Activated CD4-positive, alpha-beta T cell treated with anti-CD3 and anti-CD28 coated beads for 36 hours (primary cell): ENCODE measurements at regions of chr13 and their contacts with region 1.

Region 1: DNA sequence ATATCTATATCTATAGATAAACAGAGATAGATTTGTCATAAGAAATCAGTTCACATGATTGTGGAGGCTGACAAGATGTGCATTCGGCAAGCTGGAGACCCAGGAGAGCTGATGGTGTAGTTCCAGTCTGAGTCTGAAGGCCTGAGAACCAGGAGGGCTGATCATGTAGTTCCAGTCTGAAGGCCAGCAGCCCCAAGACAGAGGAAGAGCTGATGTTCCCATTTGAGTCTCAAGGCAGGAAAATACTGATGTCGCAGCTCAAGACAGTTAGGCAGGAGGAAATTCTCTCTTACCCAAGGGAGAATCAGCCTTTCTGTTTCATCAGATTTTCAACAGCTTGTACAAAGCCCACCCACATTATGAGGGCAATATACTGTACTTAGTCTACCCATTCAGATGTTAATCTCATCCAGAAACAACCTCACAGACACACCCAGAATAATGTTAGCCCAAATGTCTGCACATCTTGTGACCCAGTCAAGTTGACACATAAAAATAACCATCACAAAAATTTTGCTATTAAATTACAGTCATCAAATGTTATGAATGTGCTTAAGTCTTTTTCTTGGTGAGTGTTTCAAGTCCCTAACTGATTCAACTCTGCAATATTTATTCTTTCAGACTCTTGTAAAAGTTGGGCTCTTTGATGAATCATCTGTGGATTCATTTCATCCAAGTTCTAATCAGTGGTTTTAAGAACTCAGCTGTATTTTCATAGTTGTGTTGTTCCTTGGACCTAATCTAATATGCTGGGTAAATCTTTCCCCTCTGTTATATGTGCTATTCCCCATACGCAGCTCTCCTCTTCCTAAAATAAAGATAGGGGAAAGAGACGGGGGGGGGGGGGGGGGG is 22.7 kb upstream of the LRCH1 start:
- DNase-seq: no peak
- ATAC-seq: peak; percentile 76
- H3K4me3 Mint-ChIP-seq: no peak overlapping the region
- H3K27ac Mint-ChIP-seq: peak overlapping the region; percentile 33
- H3K4me1 Mint-ChIP-seq: peaks cover 32% of the 10 kb centered on the region
- H3K27me3 Mint-ChIP-seq: peaks cover 8% of the 10 kb centered on the region

Region 2: DNA sequence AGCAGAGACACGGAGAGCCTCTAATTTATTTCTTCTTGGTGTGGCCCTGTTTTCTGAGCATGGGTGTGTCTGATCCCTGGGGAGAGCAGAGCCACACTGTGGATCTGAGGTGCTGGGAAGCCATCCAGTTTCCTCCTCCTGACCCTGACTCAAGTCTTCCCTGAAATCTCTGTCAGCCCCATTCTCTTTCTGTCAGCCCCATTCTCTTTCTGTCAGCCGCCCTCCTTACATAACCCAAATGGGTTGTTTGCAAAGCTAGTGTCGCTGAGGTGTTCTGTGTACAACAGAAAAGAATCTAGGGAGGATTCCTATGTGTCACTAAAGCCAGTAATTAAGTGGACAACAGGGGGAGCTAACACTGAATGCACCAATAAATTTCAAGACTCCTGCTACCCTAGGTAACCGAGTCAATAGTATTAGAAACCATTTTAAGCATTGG is 72.9 kb after region 1 on chr13:
- CTCF ChIA-PET with region 1: no interaction called
- POLR2A ChIA-PET with region 1: no interaction called
- intact Hi-C with region 1: loop called in 1 of 2 experiments (anchors 2 kb)
- DNase-seq: no peak
- ATAC-seq: no peak
- H3K4me3 Mint-ChIP-seq: no peak overlapping the region
- H3K27ac Mint-ChIP-seq: no peak overlapping the region
- H3K4me1 Mint-ChIP-seq: peaks cover 74% of the 10 kb centered on the region
- H3K27me3 Mint-ChIP-seq: no peaks in the 10 kb centered on the region

Region 3: DNA sequence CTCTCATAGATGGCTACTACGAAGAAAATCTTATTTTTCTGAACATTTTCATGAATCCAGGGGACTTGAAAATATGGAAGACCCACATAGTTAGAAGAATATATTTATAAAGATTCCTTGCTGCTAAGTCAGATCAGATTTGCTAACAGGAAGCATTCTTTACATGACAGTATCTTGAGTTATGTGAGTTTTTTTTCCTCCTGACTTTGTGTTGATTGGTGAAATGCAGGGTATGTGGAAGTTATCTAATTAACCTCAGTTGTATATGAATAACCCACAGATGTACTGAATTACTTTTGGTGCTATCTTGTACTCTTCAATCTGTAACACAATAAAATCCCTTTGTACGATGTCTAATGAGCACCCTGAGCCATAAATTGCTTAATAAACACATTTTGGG is 212.9 kb after region 1 on chr13:
- CTCF ChIA-PET with region 1: no interaction called
- POLR2A ChIA-PET with region 1: no interaction called
- intact Hi-C with region 1: no loop called
- DNase-seq: no peak
- ATAC-seq: no peak
- H3K4me3 Mint-ChIP-seq: no peak overlapping the region
- H3K27ac Mint-ChIP-seq: no peak overlapping the region
- H3K4me1 Mint-ChIP-seq: no peaks in the 10 kb centered on the region
- H3K27me3 Mint-ChIP-seq: no peaks in the 10 kb centered on the region